GM10248 (cell line): ENCODE measurements at regions of chr9 and their contacts with region 1.

Region 1: GRCh38 chr9:75866273-75866871 is 24.1 kb upstream of the PCSK5 start:
- DNase-seq: peak; percentile 23
- CTCF ChIP-seq: peak; percentile 64

Region 2: GRCh38 chr9:75855509-75855908 is 10.9 kb before region 1 on chr9:
- CTCF ChIA-PET with region 1: interaction called, 20 read pairs
- POLR2A ChIA-PET with region 1: interaction called, 5 read pairs
- DNase-seq: no peak
- CTCF ChIP-seq: peak; percentile 10

Region 3: DNA sequence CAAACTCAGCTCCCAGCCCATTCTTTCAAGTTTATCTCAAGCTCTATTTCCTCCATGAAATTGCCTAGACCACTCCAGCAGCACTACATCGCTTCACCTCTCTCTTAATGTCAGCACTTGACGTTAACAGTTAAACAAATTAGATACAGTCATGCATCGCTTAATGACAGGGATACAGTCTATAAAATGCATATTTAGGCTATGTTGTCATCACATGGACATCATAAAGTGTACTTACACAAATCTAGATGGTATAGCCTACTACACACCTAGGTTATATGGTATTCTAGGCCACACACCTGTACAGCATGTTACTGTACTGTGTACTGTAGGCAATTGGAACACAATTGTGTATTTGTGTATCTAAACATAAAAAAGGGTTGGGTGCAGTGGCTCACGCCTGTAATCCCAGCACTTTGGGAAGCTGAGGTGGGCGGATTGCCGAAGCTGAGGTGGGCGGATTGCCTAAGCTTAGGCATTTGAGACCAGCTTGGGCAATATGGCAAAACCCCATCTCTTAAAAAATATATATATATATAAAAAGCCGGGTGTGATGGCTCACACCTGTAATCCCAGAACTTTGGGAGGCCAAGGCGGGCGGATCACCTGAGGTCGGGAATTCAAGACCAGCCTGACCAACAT is 10.7 kb after region 1 on chr9:
- CTCF ChIA-PET with region 1: interaction called, 15 read pairs
- POLR2A ChIA-PET with region 1: no interaction called
- DNase-seq: no peak
- CTCF ChIP-seq: no peak